Gastrocnemius medialis (tissue), 4 donors: ENCODE measurements at regions of chr4 and their contacts with region 1.

Region 1: GRCh38 chr4:90120037-90120436 is 7.2 kb upstream of the CCSER1 start:
- DNase-seq: no peak
- ATAC-seq: no peak
- H3K4me3 ChIP-seq: no peak overlapping the region
- H3K27ac ChIP-seq: no peak overlapping the region
- H3K4me1 ChIP-seq: no peaks in the 10 kb centered on the region
- H3K27me3 ChIP-seq: no peaks in the 10 kb centered on the region
- CTCF ChIP-seq: no peak
- POLR2A ChIP-seq: no peak

Region 2: GRCh38 chr4:89110986-89111832 is 1008.8 kb before region 1 on chr4 and contains the start of gene TIGD2:
- in situ Hi-C with region 1: no loop called
- intact Hi-C with region 1: no loop called
- DNase-seq: peak; percentile 78 to 83
- ATAC-seq: peak; percentile 87 to 91
- H3K4me3 ChIP-seq: peak within 1 kb of the TSS; percentile 71 to 95 (median 88)
- H3K27ac ChIP-seq: peak within 1 kb of the TSS; percentile 87 to 94 (median 92)
- H3K4me1 ChIP-seq: peaks cover 9 to 13% of the 10 kb centered on the region in 2 donors
- H3K27me3 ChIP-seq: no peaks in the 10 kb centered on the region
- CTCF ChIP-seq: peak; percentile 82 to 88 (median 87)
- POLR2A ChIP-seq: peak; percentile 75 to 76
- total RNA-seq, gene TIGD2: 1.7 to 2.8 (median 2.4) TPM

Region 3: GRCh38 chr4:90293320-90293719 is 173.3 kb after region 1 on chr4:
- in situ Hi-C with region 1: no loop called
- intact Hi-C with region 1: loop called (anchors 2 kb)
- DNase-seq: no peak
- ATAC-seq: no peak
- H3K4me3 ChIP-seq: no peak overlapping the region
- H3K27ac ChIP-seq: no peak overlapping the region
- H3K4me1 ChIP-seq: no peaks in the 10 kb centered on the region
- H3K27me3 ChIP-seq: no peaks in the 10 kb centered on the region
- CTCF ChIP-seq: peak in 2 of 5 experiments; percentile 33 to 42
- POLR2A ChIP-seq: no peak